Lower leg skin (tissue), 4 donors: ENCODE measurements at regions of chr2 and their contacts with region 1.

Region 1: DNA sequence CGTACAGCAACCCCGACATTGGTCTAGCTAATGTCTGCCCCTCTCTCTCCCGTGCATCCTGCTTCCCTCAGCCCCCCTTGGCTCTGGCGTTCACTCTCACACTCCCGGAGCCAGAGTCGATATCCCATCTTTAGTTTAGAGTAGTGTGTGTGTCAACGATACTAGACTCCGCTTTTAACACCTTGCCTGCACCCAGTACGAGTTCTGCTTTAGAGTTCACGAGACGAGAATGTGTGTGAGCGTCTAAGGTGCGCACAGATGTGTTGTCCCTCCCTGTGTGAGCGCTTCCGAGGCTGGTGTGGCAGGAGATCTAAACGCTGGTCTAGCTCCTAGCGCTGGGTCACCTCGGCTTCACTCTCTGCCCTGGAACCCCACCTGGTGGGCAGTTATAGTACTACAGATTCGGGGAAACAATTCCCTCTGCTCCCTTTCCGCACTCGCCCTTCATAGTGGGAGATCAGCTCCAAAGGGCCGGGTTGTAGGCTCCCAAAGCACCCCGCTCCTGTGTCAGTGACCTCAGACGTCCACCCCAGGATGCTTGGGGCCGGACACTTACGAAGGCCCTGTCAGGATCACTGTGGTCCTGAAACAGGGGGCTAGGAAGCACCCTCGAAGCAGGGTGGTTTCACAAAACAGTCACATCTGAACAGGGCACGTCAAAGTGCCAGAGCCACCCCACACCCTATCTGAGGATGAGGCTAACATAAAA is 2.6 kb upstream of the CYP26B1 start:
- DNase-seq: peak; percentile 78 to 95
- H3K4me3 ChIP-seq: no peak overlapping the region
- CTCF ChIP-seq: peak in 2 of 3 donors; percentile 8 to 58
- POLR2A ChIP-seq: no peak

Region 2: DNA sequence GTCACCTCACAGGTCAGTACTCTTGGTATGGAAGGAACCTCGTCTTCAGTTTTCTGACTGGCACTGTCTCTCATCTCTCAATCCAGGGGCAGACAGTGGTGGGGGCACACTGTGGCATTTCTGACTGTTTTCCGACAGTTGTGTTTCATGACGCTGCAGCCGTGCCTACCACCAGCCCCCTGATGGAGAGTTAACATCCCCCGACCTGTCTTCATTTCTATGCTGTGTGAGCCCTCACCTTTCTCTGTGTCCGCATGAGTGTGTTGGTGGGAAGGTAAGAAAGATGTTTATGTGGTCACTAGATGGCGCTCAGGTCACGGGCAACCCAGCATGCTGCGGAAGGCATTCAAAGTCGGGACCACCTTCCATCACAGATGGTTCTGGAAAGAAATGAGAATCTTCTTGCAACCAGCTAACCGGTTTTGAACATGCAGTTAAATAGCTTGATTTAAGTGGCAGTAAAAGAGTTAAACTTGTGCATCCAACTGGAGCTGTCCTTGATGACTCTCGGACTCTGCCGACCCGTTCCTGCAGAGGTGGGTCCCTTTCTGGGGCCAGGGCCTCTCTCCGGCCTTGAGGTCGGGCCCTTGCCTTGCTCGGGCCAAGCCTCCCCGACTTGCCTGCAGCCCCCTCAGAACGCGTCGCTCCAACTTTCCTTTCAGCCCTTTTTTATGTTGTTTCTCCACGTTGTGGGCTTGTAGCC is 604.6 kb before region 1 on chr2:
- intact Hi-C with region 1: loop called (anchors 5 kb)
- DNase-seq: peak in 1 of 2 donors; percentile 35
- H3K4me3 ChIP-seq: no peak overlapping the region
- CTCF ChIP-seq: peak in 1 of 3 donors; percentile 10
- POLR2A ChIP-seq: no peak

Region 3: GRCh38 chr2:71798266-71799012 is 351.9 kb before region 1 on chr2:
- intact Hi-C with region 1: loop called (anchors 10 kb)
- DNase-seq: peak in 1 of 2 donors; percentile 84
- H3K4me3 ChIP-seq: no peak overlapping the region
- CTCF ChIP-seq: peak in 1 of 3 donors; percentile 23
- POLR2A ChIP-seq: no peak

Region 4: DNA sequence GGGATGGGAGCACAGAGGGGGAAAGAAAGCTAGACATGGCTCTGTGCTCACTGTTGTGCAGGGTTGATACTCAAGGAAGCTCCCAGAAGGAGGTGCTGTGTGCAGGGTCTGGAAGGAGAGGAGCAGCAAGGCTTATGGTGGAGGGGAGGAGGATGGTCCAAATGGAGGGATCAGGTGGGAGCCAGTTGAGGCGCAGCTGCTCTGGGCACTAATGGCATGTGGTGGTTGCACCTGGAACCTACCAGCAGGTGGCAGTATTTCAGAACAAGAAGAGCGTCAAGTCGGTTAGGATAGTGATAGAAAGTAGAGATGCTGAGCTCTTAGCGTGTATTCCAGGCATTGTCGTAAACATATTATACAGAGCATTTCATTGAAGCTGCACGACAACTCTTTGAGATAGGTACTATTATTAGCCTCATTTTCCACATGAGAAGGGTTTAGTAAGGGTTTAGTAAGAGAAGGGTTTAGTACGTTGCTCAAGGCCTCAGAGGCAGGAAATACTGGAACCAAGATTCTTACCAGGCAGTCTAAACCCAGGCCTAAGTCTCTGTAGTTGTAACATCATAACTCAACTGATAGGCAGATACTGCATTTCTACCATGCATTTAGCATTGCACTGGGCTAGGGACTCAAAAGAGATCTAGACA is 226.3 kb before region 1 on chr2:
- intact Hi-C with region 1: loop called (anchors 5 kb)
- DNase-seq: peak in 1 of 2 donors; percentile 90
- H3K4me3 ChIP-seq: no peak overlapping the region
- CTCF ChIP-seq: peak in 1 of 3 donors; percentile 33
- POLR2A ChIP-seq: no peak

Region 5: DNA sequence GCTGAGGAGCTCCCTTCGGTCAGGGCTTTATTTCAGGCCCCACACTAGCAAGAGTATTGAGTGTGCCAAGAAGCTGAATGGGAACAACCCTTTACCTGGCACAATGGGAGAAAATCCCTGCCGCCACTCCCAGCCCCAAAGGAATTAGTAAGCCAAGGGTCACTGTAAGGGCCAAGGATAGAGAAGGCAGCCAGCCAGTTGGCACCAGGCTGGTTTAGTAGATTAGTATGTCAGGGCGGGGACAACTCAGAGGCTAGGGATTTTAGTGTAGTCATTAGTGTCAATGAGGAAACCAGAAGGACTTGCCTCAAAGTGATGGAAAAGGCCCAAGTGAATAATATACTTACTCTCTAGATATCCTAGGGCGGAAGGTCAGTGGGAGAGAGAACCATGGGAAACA is 32.2 kb after region 1 on chr2:
- intact Hi-C with region 1: no loop called
- DNase-seq: no peak
- H3K4me3 ChIP-seq: no peak overlapping the region
- CTCF ChIP-seq: no peak
- POLR2A ChIP-seq: no peak

Region 6: DNA sequence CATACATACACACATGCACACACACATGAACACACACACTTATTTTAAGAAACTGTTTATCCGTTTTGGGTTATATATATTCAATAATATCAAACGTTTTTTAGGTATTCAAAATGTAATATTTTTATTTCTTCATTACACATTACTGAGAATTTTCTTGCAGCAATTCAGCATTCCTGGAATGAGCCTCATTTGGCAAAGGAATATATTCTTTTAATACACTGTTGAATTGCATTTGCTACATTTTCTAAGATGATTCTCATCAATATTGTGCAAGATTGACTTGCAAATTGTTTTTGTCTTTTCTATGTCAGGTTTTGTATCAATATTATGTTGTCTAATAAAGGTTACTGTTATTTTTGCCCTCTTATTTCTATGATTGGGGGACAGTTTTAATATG is 273.4 kb after region 1 on chr2:
- intact Hi-C with region 1: no loop called
- DNase-seq: no peak
- H3K4me3 ChIP-seq: no peak overlapping the region
- CTCF ChIP-seq: no peak
- POLR2A ChIP-seq: no peak